ENCODE measurements at regions of chr10 and their contacts with region 1.

Region 1: DNA sequence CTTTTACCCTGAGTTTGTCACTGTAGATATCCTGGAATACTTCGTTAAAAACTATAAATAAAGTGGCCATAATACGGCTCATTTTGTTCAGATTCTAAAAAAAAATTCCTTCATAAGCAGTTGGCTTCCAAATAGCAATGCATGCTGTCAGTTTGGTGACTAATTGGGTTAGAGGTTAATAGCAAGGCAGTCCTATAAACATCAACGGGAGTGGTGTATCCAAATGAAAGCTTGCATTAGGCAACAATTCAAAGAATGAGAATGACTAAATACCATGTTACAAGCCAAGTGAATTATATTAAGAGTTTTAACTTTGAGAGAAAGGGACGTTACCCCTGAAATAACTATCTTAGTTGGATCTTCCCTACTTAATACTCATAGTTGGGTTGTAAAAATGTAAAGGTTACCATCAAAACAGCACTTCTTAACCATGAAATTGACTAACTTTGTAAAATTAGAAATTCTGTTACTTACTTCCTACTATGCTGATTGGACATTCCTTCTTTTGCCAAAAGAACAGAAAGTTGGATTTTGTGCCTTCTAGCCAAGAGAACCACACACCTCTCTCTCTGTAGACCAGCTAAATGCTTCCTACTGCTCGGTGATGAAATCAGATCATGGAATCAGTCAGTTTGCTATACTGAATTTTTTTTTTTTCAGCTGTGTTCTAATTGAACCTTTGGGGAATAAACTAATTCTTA is 98.0 kb downstream of the KAT6B start:
- DNase-seq: peak; percentile 100
- ATAC-seq: peak; percentile 67
- H3K4me3 ChIP-seq: peak overlapping the region; percentile 49
- H3K27ac ChIP-seq: peak overlapping the region; percentile 78
- H3K4me1 ChIP-seq: peaks cover 90% of the 10 kb centered on the region
- H3K27me3 ChIP-seq: no peaks in the 10 kb centered on the region
- CTCF ChIP-seq: no peak

Region 2: GRCh38 chr10:73899423-73899822 is 1025.0 kb before region 1 on chr10:
- CTCF ChIA-PET with region 1: no interaction called
- POLR2A ChIA-PET with region 1: no interaction called
- intact Hi-C with region 1: loop called (anchors 10 kb)
- DNase-seq: peak; percentile 100
- ATAC-seq: peak; percentile 93
- H3K4me3 ChIP-seq: peak overlapping the region; percentile 8; the same call in 1 of the 2 replicates
- H3K27ac ChIP-seq: peak overlapping the region; percentile 78
- H3K4me1 ChIP-seq: peaks cover 54% of the 10 kb centered on the region
- H3K27me3 ChIP-seq: no peaks in the 10 kb centered on the region
- CTCF ChIP-seq: no peak

Region 3: GRCh38 chr10:74598891-74599566 is 325.4 kb before region 1 on chr10:
- CTCF ChIA-PET with region 1: no interaction called
- POLR2A ChIA-PET with region 1: no interaction called
- intact Hi-C with region 1: loop called (anchors 5 kb)
- DNase-seq: peak; percentile 74
- ATAC-seq: peak; percentile 89
- H3K4me3 ChIP-seq: no peak overlapping the region
- H3K27ac ChIP-seq: no peak overlapping the region
- H3K4me1 ChIP-seq: peaks cover 12% of the 10 kb centered on the region
- H3K27me3 ChIP-seq: no peaks in the 10 kb centered on the region
- CTCF ChIP-seq: no peak

Region 4: DNA sequence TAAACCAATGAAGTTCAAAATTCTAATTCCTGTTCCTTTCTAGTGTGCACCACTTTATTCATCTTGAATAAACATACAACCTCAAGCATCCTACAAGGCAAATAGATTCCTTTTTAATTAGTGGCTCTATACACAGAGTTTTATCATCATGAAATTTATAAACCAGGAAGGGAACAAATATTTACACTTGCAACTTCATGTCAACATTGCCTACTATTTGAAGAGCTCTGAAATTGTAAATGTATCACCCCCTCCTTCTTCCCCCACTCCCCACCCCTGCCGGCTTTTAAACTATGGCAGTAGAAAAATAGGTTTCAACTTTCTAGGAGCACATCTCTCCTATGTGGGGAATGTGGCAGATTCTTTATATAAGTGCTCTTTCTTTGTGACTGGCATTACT is 48.4 kb before region 1 on chr10:
- CTCF ChIA-PET with region 1: interaction called, 4 read pairs
- POLR2A ChIA-PET with region 1: interaction called, 4 read pairs
- intact Hi-C with region 1: loop called (anchors 1 kb)
- DNase-seq: peak; percentile 99
- ATAC-seq: peak; percentile 92
- H3K4me3 ChIP-seq: peak overlapping the region; percentile 1; the same call in 1 of the 2 replicates
- H3K27ac ChIP-seq: peak overlapping the region; percentile 67
- H3K4me1 ChIP-seq: peaks cover 56% of the 10 kb centered on the region
- H3K27me3 ChIP-seq: no peaks in the 10 kb centered on the region
- CTCF ChIP-seq: no peak

Region 5: DNA sequence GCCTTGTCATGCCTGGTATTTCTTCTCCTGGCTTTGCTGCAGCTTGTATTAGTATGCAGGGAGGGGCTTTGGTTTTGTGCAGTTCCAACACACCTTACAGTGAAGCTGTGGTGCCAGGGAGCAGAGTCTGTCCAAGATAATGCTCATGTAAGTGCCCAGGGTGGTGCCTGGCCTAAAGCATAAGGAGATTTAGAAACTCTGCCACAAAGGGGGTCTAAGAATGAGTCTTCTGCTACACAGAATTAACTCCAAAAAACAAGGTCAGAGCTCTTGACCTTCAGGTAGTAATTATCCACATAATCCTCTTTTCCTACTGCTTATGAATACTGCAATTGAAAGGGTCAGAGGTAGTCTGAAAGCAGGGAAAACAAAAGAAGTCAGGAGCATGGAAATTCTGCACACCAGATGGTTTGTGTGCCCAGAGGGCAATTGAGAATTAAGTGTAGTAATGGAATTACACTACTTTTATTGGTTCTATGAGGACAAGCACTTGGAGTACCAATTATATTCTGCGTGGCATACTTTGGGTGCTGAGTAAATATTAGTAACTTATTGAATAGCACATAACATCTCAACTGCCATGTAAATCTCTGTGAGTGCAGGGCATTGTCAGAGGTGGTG is 23.5 kb after region 1 on chr10:
- CTCF ChIA-PET with region 1: no interaction called
- POLR2A ChIA-PET with region 1: no interaction called
- intact Hi-C with region 1: loop called (anchors 1 kb)
- DNase-seq: peak; percentile 99
- ATAC-seq: peak; percentile 87
- H3K4me3 ChIP-seq: no peak overlapping the region; the same call in 1 of the 2 replicates
- H3K27ac ChIP-seq: peak overlapping the region; percentile 54
- H3K4me1 ChIP-seq: peaks cover 43% of the 10 kb centered on the region
- H3K27me3 ChIP-seq: no peaks in the 10 kb centered on the region
- CTCF ChIP-seq: no peak

Region 6: GRCh38 chr10:74967911-74968645 is 43.7 kb after region 1 on chr10:
- CTCF ChIA-PET with region 1: interaction called, 3 read pairs
- POLR2A ChIA-PET with region 1: interaction called, 5 read pairs
- intact Hi-C with region 1: loop called (anchors 1 kb)
- DNase-seq: peak; percentile 100
- ATAC-seq: peak; percentile 73
- H3K4me3 ChIP-seq: peak overlapping the region; percentile 10
- H3K27ac ChIP-seq: peak overlapping the region; percentile 28
- H3K4me1 ChIP-seq: peaks cover 25% of the 10 kb centered on the region
- H3K27me3 ChIP-seq: no peaks in the 10 kb centered on the region
- CTCF ChIP-seq: no peak; the same call in 1 of the 2 replicates

Region 7: GRCh38 chr10:75235375-75236177 is 311.2 kb after region 1 on chr10 and contains the start of gene COMTD1:
- CTCF ChIA-PET with region 1: no interaction called
- POLR2A ChIA-PET with region 1: no interaction called
- intact Hi-C with region 1: loop called (anchors 10 kb)
- DNase-seq: peak; percentile 100
- ATAC-seq: peak; percentile 59
- H3K4me3 ChIP-seq: peak within 1 kb of the TSS; percentile 72
- H3K27ac ChIP-seq: peak within 1 kb of the TSS; percentile 71
- H3K4me1 ChIP-seq: peaks cover 42% of the 10 kb centered on the region
- H3K27me3 ChIP-seq: no peaks in the 10 kb centered on the region
- CTCF ChIP-seq: peak; percentile 100
- total RNA-seq, gene COMTD1: 183 and 214 TPM in 2 replicates

Measured in PC-3 (cell line).